Heart right ventricle (tissue), 16 donors: ENCODE measurements at regions of chr1 and their contacts with region 1.

Region 1: DNA sequence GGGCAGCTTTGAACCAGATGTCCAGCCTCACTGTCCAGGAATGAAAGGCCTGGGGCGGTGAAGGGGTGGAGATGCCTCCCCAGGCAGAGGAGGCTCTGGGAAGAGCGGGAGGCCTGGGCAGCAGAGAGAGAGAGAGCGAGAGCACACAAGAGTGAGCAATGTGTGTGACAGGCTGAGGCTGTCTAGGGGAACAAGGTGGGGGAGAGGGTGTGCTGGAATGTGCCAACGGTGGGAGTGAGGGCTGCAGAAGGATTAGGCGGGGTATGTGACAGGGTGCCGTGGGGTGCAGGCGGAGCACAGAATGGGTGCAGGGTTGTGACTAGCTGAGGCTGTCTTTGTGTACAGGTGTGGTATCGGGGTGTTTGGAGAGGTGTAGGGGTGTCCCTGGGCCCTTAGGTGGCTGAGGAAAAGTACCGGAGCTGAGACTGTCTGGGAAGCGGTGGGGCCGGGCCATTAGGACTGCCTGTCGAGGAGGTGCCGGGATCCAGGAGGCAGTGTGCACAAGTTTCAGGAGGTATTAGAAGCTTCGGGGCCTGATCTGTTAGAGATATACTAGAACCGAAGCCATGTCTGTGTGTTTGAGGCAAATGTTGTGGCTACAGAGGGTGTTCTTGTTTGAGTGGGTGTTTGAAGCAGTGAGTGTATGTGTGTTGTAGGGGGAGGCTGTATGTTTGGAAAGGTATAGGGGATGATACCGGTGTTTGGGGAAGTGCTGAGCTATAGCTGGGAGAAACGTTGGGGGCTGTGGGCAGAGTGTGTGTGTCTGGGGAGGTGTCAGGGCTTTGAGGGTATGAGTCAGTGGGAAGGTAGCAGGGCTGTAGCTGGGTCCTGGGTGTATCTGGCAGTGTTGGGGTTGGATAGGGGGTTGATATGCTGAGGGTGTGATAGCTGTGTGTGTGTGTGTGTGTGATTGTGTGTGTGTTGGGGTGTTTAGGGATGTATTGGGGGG is 9.1 kb downstream of the AHDC1 start:
- DNase-seq: no peak
- ATAC-seq: peak in 1 of 8 donors; percentile 5
- H3K4me3 ChIP-seq: no peak overlapping the region
- H3K27ac ChIP-seq: peak overlapping the region in 9 of 10 donors; percentile 14 to 99 (median 72)
- H3K4me1 ChIP-seq: peaks cover 85 to 100% (median 98%) of the 10 kb centered on the region in 9 donors
- H3K27me3 ChIP-seq: no peaks in the 10 kb centered on the region
- CTCF ChIP-seq: no peak

Region 2: DNA sequence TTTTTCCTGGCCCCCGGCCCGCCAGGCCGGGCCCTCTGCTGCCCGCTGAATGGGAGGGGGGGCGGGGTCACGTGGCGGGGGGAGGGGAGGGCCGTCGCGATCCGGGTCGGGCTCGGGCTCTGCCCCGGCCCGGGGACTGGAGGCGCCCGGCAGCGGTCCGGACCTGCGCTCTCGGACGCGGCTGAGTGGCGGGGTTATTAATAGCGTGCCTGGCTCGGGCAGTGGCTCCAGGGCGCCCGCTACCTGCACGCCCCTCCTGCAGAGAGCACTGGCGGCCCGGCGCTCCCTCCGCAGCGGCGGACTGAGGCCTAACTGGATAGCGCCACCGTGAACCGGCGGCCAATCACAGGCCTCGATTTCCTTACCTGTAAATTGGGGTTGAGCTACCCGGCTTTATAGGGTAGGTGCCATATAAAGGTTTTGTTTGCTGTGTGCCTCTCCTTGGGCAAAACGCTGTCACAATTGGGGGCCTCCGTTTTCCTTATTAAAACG is 18.9 kb before region 1 on chr1:
- intact Hi-C with region 1: loop called in 1 of 10 experiments (anchors 2 kb)
- DNase-seq: peak; percentile 82 to 84
- ATAC-seq: peak; percentile 74 to 89 (median 76)
- H3K4me3 ChIP-seq: peak overlapping the region; percentile 28 to 57 (median 51)
- H3K27ac ChIP-seq: peak overlapping the region; percentile 73 to 98 (median 93)
- H3K4me1 ChIP-seq: peaks cover 65 to 96% (median 84%) of the 10 kb centered on the region in 9 donors
- H3K27me3 ChIP-seq: peaks cover 0 to 20% (median 0%) of the 10 kb centered on the region in 7 donors
- CTCF ChIP-seq: peak in 4 of 9 donors; percentile 16 to 58 (median 50)

Region 3: DNA sequence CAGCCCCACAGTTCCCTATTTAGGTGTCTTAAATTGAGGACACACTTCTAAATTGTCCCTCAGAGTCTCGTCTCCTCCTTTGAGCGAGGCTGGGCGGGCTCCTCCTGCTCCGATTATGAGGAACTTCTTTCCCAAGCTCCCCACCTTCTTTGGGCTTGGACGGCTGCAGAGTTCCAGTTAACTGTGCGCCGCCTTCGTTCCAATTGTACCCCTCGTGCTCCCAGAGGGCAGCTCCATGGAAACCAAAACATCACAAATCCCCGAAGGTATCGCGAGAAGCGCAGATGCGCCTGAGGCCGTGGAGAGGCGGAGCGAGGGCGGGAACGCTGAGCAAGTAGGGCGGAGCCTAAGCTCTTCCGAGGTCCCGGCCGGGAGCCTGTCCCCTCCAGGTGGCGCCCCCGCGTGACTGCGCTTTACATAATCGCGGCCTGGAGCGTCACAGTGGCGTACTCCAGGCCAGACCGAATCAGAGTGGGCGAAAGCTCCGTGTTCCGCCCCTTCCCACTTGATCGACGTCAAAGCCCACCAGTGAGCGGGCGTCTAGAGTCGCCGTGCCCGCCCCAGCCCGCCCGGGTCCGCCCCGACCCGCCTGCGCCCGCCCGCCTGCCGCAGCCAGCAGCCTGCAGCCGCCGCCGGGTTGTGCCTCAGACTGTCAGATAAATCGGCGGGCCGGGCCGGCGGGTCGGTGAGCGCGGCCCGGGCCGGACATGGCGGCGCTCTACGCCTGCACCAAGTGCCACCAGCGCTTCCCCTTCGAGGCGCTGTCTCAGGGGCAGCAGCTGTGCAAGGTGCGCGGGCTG is 130.7 kb after region 1 on chr1 and contains the start of gene FAM76A:
- intact Hi-C with region 1: no loop called
- DNase-seq: peak; percentile 99 to 100
- ATAC-seq: peak; percentile 97 to 99 (median 98)
- H3K4me3 ChIP-seq: peak within 1 kb of the TSS; percentile 70 to 98 (median 93)
- H3K27ac ChIP-seq: peak within 1 kb of the TSS; percentile 83 to 98 (median 92)
- H3K4me1 ChIP-seq: peaks cover 0 to 20% (median 16%) of the 10 kb centered on the region in 9 donors
- H3K27me3 ChIP-seq: no peaks in the 10 kb centered on the region
- CTCF ChIP-seq: peak in 8 of 9 donors; percentile 39 to 78 (median 64)
- total RNA-seq, gene FAM76A: 9.6 to 15.1 (median 13.1) TPM